Sigmoid colon (tissue), 7 donors: ENCODE measurements at regions of chr19 and their contacts with region 1.

Region 1: DNA sequence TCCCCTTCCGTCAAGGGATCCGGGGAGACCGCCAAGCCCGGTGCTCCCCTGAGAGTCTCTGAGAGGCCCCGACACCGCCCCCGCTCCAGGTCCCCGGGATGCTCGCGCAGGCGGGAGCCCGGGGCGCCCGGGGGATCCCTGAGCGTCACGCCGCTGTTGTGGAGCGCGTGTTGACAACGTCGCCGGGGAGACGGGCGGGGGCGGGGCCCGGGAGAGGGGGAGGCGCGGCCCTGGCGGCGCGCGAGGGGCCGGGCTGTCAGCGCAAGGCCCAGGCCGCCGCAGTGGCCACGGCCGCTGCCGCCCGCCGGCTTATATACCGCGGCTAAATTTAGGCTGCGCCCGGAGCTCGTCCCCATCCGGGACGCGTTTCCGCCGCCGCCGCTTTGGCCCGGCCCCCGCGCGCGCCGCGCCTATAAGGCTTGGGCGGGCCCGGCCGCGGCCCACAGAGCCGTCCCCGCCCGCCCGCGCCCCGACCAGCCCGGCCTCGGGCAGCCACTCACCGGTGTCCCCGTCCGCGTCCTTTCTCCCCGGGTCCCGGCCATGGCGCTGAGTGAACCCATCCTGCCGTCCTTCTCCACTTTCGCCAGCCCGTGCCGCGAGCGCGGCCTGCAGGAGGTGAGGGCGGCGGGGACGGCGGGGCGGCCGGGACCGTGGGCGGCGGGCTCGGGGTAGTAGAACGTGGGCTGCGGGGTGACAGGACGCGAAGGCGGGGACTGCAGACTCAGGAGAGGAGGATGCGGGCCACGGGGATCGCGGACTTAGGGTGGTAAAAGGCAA is at the start of gene KLF2:
- DNase-seq: peak; percentile 97
- H3K4me3 ChIP-seq: peak within 1 kb of the TSS; percentile 66 to 92 (median 82)
- H3K27ac ChIP-seq: peak within 1 kb of the TSS; percentile 94 to 97 (median 97)
- H3K4me1 ChIP-seq: peaks cover 0 to 42% (median 35%) of the 10 kb centered on the region in 4 donors
- H3K27me3 ChIP-seq: no peaks in the 10 kb centered on the region
- CTCF ChIP-seq: no peak
- EP300 ChIP-seq: peak in 1 of 4 donors; percentile 47
- POLR2A ChIP-seq: peak in 1 of 2 donors; percentile 79
- total RNA-seq, gene KLF2: 17.1 to 49.3 (median 28.3) TPM

Region 2: GRCh38 chr19:16247353-16248182 is 77.0 kb before region 1 on chr19:
- intact Hi-C with region 1: loop called (anchors 5 kb)
- DNase-seq: peak; percentile 94
- H3K4me3 ChIP-seq: no peak overlapping the region
- H3K27ac ChIP-seq: no peak overlapping the region
- H3K4me1 ChIP-seq: peaks cover 0 to 7% (median 0%) of the 10 kb centered on the region in 4 donors
- H3K27me3 ChIP-seq: no peaks in the 10 kb centered on the region
- CTCF ChIP-seq: peak; percentile 92 to 99 (median 96)
- EP300 ChIP-seq: no peak
- POLR2A ChIP-seq: no peak

Region 3: DNA sequence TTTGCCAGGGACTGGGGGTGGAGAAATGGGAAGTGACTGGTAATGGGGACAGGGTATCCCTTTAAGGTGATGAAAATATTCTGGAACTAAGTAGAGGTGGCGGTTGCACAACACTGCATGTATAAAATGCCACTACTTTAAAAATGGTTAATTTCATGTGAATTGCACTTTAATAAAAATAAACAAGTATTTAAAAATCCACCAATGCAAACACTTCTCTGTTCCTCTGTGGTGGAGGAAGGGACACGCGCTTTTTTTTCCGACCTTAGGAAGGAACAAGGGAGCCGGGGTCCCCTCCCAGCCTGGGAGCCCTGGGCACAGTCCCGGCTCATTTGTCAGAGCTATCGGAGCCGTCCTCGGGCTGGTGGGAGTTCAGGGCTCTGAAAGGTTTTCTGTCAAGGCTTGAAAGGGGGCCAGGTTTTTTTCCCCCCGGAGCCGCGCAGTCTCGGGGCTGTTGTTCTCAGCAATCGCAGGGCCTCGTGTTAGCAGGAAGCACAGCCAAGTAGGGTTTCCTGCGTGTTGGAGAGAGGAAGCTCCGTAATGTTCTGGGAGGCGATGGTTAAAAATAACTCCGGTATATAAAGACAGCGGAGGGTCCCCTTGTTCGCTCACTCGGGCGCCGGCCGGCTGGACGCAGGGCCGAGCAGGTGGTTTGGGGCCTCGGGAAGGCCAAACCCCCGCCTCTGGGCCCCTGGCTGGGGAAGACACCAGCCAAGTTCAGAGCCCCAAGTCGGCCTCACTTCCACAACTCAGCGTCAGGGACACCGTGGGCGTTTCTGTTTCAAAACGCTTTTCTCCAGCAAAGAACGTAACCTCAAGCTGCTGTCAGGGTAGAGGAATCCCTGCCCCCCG is 41.1 kb before region 1 on chr19:
- intact Hi-C with region 1: loop called (anchors 2 kb)
- DNase-seq: peak; percentile 95
- H3K4me3 ChIP-seq: peak overlapping the region in 3 of 4 donors; percentile 33 to 39 (median 34)
- H3K27ac ChIP-seq: peak overlapping the region; percentile 89 to 98 (median 94)
- H3K4me1 ChIP-seq: peaks cover 0 to 40% (median 35%) of the 10 kb centered on the region in 4 donors
- H3K27me3 ChIP-seq: no peaks in the 10 kb centered on the region
- CTCF ChIP-seq: no peak
- EP300 ChIP-seq: peak; percentile 13 to 89 (median 43)
- POLR2A ChIP-seq: peak; percentile 69 to 88

Region 4: GRCh38 chr19:16293118-16294091 is 31.2 kb before region 1 on chr19:
- intact Hi-C with region 1: loop called (anchors 2 kb)
- DNase-seq: peak; percentile 96
- H3K4me3 ChIP-seq: peak overlapping the region; percentile 11 to 36 (median 24)
- H3K27ac ChIP-seq: peak overlapping the region; percentile 77 to 92 (median 83)
- H3K4me1 ChIP-seq: peaks cover 0 to 32% (median 22%) of the 10 kb centered on the region in 4 donors
- H3K27me3 ChIP-seq: no peaks in the 10 kb centered on the region
- CTCF ChIP-seq: no peak
- EP300 ChIP-seq: peak in 1 of 4 donors; percentile 4
- POLR2A ChIP-seq: no peak

Region 5: DNA sequence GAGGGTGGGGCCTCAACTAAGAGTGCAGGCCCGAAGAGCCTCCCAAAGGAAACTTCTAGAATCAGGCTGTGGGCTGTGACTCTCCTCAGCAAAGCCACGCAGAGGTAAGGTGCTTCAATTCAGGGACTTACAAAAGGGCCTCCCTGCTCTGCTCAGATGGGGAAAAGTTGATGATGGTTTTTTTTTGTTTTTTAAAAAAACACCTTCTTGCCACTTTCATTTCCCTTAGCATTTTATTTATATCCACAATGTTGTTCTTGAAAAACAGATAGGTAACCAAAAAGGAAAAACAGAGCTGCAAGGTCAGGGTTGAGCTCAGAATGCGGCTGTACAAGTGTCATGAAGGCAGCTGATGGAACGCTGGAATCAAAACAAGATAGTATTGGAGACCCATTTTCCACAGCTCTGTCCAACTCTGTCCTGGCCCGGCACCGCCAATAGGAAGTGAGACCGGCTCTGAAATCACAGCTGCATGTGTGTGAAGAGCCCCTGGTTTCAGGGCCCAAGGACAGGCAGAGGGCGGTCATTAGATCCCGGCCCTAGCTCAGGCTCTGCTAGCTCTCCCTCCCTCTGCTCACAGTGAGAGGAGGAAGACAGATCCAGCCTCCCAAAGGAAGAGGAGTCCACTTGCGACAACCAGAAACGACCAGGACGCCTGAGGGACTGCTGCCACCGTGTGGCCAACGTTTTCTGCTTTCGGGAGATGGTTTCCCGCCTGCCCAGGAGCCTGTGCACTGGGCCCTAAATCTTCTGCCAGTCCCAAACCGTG is 58.4 kb after region 1 on chr19:
- intact Hi-C with region 1: loop called (anchors 2 kb)
- DNase-seq: peak; percentile 95
- H3K4me3 ChIP-seq: no peak overlapping the region
- H3K27ac ChIP-seq: peak overlapping the region; percentile 79 to 91 (median 86)
- H3K4me1 ChIP-seq: peaks cover 0 to 33% (median 29%) of the 10 kb centered on the region in 4 donors
- H3K27me3 ChIP-seq: no peaks in the 10 kb centered on the region
- CTCF ChIP-seq: peak; percentile 80 to 86 (median 82)
- EP300 ChIP-seq: no peak
- POLR2A ChIP-seq: no peak